A549 (cell line): ENCODE measurements at regions of chr14 and their contacts with region 1.

Region 1: GRCh38 chr14:104723648-104724406 is at the start of gene ADSS1:
- DNase-seq: peak; percentile 70 to 74
- ATAC-seq: peak; percentile 35 to 51
- H3K4me3 ChIP-seq: peak within 1 kb of the TSS; percentile 71
- H3K27ac ChIP-seq: peak within 1 kb of the TSS; percentile 82 to 92
- H3K4me1 ChIP-seq: peaks cover 46% of the 10 kb centered on the region
- CTCF ChIP-seq: peak; percentile 96
- EP300 ChIP-seq: no peak
- POLR2A ChIP-seq: peak; percentile 95
- RAD21 ChIP-seq: peak in 1 of 2 experiments; percentile 46; a peak in 3 of 5 replicates
- polyA plus RNA-seq, gene ADSS1: 8.8 and 10.1 TPM in 2 replicates

Region 2: GRCh38 chr14:104689109-104689880 is 34.5 kb before region 1 on chr14 and contains the start of gene INF2:
- CTCF ChIA-PET with region 1: interaction called, 16 read pairs
- POLR2A ChIA-PET with region 1: interaction called, 5 read pairs
- DNase-seq: peak; percentile 84 to 87
- ATAC-seq: peak; percentile 64 to 71
- H3K4me3 ChIP-seq: peak within 1 kb of the TSS; percentile 99
- H3K27ac ChIP-seq: peak within 1 kb of the TSS; percentile 98
- H3K4me1 ChIP-seq: peaks cover 73% of the 10 kb centered on the region
- CTCF ChIP-seq: peak; percentile 26; the same call in 1 of the 3 replicates
- EP300 ChIP-seq: no peak
- POLR2A ChIP-seq: peak; percentile 56
- RAD21 ChIP-seq: peak; percentile 8 to 40; a peak in 4 of 5 replicates
- polyA plus RNA-seq, gene INF2: 23.6 and 24.7 TPM in 2 replicates

Region 3: DNA sequence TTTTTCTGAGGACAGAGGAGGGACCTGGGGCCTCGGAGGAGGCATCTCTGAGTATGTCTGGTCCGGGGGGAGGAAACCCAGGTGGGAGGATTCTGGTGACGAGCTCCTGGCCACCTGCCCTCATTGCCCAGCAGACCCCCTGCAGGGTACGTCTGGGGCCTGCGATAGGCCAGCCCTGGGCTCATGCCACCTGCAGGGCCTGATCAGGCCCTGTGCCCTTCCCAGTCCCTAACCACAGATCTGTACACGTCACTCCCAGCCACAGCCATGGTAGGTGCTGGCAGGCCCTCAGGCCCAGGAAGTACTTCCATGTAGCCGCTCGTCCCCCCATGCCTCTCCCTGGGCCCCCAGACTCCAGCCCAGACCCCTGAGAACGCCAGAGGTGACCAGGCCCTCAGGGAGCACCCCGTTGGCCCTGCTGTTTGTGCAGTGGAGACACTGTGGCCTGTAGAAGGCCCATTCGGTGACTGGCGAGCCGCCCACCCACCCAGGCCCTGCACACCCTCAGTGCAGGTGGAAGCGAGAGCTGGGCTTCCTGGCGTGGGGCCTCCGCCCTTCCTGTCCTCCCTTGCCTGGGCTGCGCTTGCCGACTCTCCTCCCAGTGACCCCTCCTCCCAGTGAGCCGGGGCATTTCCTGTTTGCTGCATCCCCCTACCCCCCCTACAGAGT is 28.7 kb before region 1 on chr14:
- CTCF ChIA-PET with region 1: interaction called, 16 read pairs
- POLR2A ChIA-PET with region 1: no interaction called
- DNase-seq: no peak
- ATAC-seq: 0 out of 6 replicates have a peak, but pooled peaks of 1 of the 2 experiments have one; percentile 6
- H3K4me3 ChIP-seq: no peak overlapping the region
- H3K27ac ChIP-seq: peak overlapping the region; percentile 31 to 98; a peak in 4 of 6 replicates
- H3K4me1 ChIP-seq: peaks cover 95% of the 10 kb centered on the region
- CTCF ChIP-seq: no peak
- EP300 ChIP-seq: no peak
- POLR2A ChIP-seq: no peak
- RAD21 ChIP-seq: no peak

Region 4: DNA sequence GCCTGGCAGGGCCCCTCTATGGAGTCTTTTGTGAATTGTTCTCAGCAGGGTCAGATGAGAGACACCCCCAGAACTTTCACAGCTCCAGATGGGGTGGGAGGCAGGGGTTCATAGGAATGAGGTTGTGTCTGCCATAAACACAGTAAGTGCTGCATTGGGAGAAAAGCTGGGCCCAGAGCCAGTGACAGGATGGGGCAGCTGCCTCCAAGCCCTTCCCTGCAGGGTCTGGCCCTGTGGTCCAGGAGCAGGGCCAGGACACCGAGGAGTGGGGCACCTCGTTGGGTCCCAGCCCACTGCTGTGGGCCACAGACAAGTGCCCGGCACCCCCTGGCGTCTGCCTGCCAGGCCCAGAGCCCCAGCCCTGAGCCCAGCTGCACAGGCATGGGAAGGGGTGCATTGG is 21.2 kb before region 1 on chr14:
- CTCF ChIA-PET with region 1: interaction called, 41 read pairs
- POLR2A ChIA-PET with region 1: no interaction called
- DNase-seq: no peak
- ATAC-seq: no peak
- H3K4me3 ChIP-seq: no peak overlapping the region
- H3K27ac ChIP-seq: no peak overlapping the region
- H3K4me1 ChIP-seq: peaks cover 46% of the 10 kb centered on the region
- CTCF ChIP-seq: no peak
- EP300 ChIP-seq: no peak
- POLR2A ChIP-seq: no peak
- RAD21 ChIP-seq: no peak

Region 5: DNA sequence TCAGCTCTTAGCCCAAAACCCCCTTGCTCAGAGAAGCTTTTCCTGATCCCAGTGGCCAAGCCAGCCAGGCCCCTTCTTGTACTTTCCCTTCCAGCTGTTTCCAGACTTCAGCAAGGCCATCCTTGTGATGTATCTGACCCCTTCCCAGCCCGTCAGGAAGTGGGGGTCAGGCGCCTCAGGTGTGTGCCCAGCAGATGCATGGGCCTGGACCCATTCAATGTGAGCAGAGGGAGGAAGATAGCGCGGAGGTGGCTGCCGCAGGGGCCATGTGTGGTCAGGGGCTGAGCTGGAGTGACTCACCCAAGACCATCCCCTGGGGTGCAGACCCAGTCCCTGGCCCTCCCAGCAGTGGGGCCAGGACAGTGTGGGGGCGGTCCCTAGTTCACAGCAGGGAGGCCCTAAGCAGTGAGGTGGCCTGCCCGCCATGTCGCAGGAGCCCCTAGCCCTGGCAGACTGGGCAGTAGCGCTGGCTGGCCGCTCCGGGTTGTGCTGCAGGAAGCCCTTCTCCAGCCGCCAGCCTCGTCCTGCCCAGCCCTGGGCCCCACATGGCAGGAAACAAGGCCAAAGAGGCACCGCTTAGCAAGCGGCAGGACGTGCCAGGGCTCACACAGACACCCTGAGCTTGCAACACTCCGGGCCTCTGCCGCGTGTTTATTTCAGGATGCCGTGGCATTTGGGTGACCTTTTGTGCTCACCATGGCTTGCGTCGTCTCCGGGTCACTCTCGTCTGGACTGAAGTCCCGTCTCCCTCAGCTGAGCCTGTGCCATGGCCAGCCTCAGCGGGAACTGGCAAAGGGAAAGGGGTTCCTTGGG is 12.2 kb after region 1 on chr14:
- CTCF ChIA-PET with region 1: interaction called, 65 read pairs
- POLR2A ChIA-PET with region 1: no interaction called
- DNase-seq: no peak
- ATAC-seq: no peak
- H3K4me3 ChIP-seq: no peak overlapping the region
- H3K27ac ChIP-seq: peak overlapping the region in 1 of 2 experiments; percentile 39; a peak in 2 of 6 replicates
- H3K4me1 ChIP-seq: peaks cover 43% of the 10 kb centered on the region
- CTCF ChIP-seq: no peak
- EP300 ChIP-seq: no peak
- POLR2A ChIP-seq: no peak
- RAD21 ChIP-seq: no peak

Region 6: GRCh38 chr14:104752735-104753531 is 29.1 kb after region 1 on chr14 and contains the start of gene SIVA1:
- CTCF ChIA-PET with region 1: interaction called, 31 read pairs
- POLR2A ChIA-PET with region 1: interaction called, 5 read pairs
- DNase-seq: peak; percentile 98 to 100
- ATAC-seq: peak; percentile 92 to 95
- H3K4me3 ChIP-seq: peak within 1 kb of the TSS; percentile 100
- H3K27ac ChIP-seq: peak within 1 kb of the TSS; percentile 93 to 96
- H3K4me1 ChIP-seq: peaks cover 28% of the 10 kb centered on the region
- CTCF ChIP-seq: no peak
- EP300 ChIP-seq: no peak
- POLR2A ChIP-seq: peak; percentile 86
- RAD21 ChIP-seq: no peak
- polyA plus RNA-seq, gene SIVA1: 90.0 and 94.2 TPM in 2 replicates

Region 7: GRCh38 chr14:104768437-104769323 is 44.9 kb after region 1 on chr14:
- CTCF ChIA-PET with region 1: interaction called, 15 read pairs
- POLR2A ChIA-PET with region 1: no interaction called
- DNase-seq: peak; percentile 74 to 86
- ATAC-seq: peak; percentile 87 to 95
- H3K4me3 ChIP-seq: no peak overlapping the region
- H3K27ac ChIP-seq: peak overlapping the region; percentile 55 to 82; a peak in 4 of 6 replicates
- H3K4me1 ChIP-seq: peaks cover 14% of the 10 kb centered on the region
- CTCF ChIP-seq: peak; percentile 82
- EP300 ChIP-seq: no peak
- POLR2A ChIP-seq: no peak
- RAD21 ChIP-seq: peak; percentile 83 to 91